GM12878 (cell line): ENCODE measurements at regions of chr5 and their contacts with region 1.

Region 1: GRCh38 chr5:37837414-37838032 is 2.3 kb downstream of the GDNF start:
- DNase-seq: no peak
- ATAC-seq: peak; percentile 93
- H3K4me3 ChIP-seq: peak overlapping the region; percentile 38; the same call in 1 of the 2 replicates
- H3K27ac ChIP-seq: no peak overlapping the region
- H3K4me1 ChIP-seq: peaks cover 3% of the 10 kb centered on the region; the same call in 1 of the 2 replicates
- H3K27me3 ChIP-seq: peaks cover 21 to 32% of the 10 kb centered on the region in 2 experiments
- CTCF ChIP-seq: peak; percentile 85 to 94 (median 92)
- EP300 ChIP-seq: no peak
- POLR2A ChIP-seq: no peak
- RAD21 ChIP-seq: peak; percentile 93

Region 2: GRCh38 chr5:38023799-38024198 is 186.3 kb after region 1 on chr5:
- CTCF ChIA-PET with region 1: no interaction called
- POLR2A ChIA-PET with region 1: no interaction called
- RAD21 ChIA-PET with region 1: no interaction called
- SMC1A ChIA-PET with region 1: no interaction called
- in situ Hi-C with region 1: no loop called
- intact Hi-C with region 1: loop called (anchors 5 kb)
- DNase-seq: no peak
- ATAC-seq: no peak
- H3K4me3 ChIP-seq: no peak overlapping the region
- H3K27ac ChIP-seq: no peak overlapping the region
- H3K4me1 ChIP-seq: no peaks in the 10 kb centered on the region
- H3K27me3 ChIP-seq: no peaks in the 10 kb centered on the region; a peak in 1 of 4 replicates
- CTCF ChIP-seq: no peak
- EP300 ChIP-seq: no peak
- POLR2A ChIP-seq: no peak
- RAD21 ChIP-seq: no peak